ENCODE measurements at regions of chr21 and their contacts with region 1.

Region 1: GRCh38 chr21:44316311-44316771 is 16.5 kb downstream of the PFKL start:
- DNase-seq: no peak
- ATAC-seq: no peak
- H3K4me3 ChIP-seq: no peak overlapping the region
- H3K27ac ChIP-seq: no peak overlapping the region
- H3K4me1 ChIP-seq: no peaks in the 10 kb centered on the region
- CTCF ChIP-seq: no peak
- EP300 ChIP-seq: no peak
- POLR2A ChIP-seq: no peak
- RAD21 ChIP-seq: no peak

Region 2: GRCh38 chr21:44304877-44305293 is 11.5 kb before region 1 on chr21:
- CTCF ChIA-PET with region 1: interaction called, 15 read pairs
- POLR2A ChIA-PET with region 1: no interaction called
- DNase-seq: peak; percentile 39 to 54
- ATAC-seq: peak; percentile 57 to 80; a peak in 4 of 6 replicates
- H3K4me3 ChIP-seq: no peak overlapping the region
- H3K27ac ChIP-seq: no peak overlapping the region
- H3K4me1 ChIP-seq: peaks cover 10% of the 10 kb centered on the region; the same call in 1 of the 3 replicates
- CTCF ChIP-seq: peak; percentile 48
- EP300 ChIP-seq: no peak
- POLR2A ChIP-seq: no peak
- RAD21 ChIP-seq: peak in 1 of 2 experiments; percentile 31; a peak in 2 of 5 replicates

Measured in A549 (cell line).